Left colon (tissue), 2 donors: ENCODE measurements at regions of chr2 and their contacts with region 1.

Region 1: GRCh38 chr2:179218848-179219594 is 45.6 kb downstream of the SESTD1 start:
- DNase-seq: peak; percentile 42 to 73
- ATAC-seq: peak; percentile 79

Region 2: GRCh38 chr2:179435000-179435399 is 216.0 kb after region 1 on chr2:
- intact Hi-C with region 1: loop called in 1 of 2 experiments (anchors 5 kb)
- DNase-seq: no peak
- ATAC-seq: no peak

Region 3: GRCh38 chr2:179751163-179751809 is 532.3 kb after region 1 on chr2:
- intact Hi-C with region 1: loop called in 1 of 2 experiments (anchors 5 kb)
- DNase-seq: no peak
- ATAC-seq: no peak